Activated CD4-positive, alpha-beta T cell treated with anti-CD3 and anti-CD28 coated beads, Interleukin-2, amount 10 ng/mL, durations not matched to agents 24 days and 14 days (primary cell): ENCODE measurements at regions of chr6 and their contacts with region 1.

Region 1: DNA sequence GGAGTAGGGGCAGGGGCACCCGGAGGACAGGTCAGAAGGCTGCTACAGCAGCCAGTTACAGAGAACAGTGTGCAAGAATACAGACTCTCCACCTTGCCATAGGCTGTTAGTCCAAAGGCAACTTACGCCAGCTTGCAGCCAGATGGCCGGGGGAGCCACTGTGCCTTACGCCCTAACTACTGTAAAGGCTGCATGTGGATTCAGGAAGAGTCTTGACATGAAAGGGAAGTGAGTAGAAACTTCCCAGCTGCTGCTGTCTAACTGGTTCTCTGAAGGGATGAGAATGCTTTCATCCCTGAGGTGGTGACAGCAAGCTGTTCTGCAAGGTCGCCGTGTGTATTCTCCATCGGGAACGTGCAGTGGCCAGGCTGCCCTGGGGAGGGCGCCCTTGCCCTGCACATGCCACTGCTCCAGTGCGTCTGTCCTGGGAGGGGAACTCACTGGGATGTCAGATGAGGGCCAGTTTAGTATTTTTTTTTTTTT is 46.1 kb downstream of the LYRM4 start:
- DNase-seq: peak; percentile 74
- H3K4me3 Mint-ChIP-seq: no peak overlapping the region
- H3K27ac Mint-ChIP-seq: no peak overlapping the region
- H3K4me1 Mint-ChIP-seq: peaks cover 10% of the 10 kb centered on the region
- H3K27me3 Mint-ChIP-seq: no peaks in the 10 kb centered on the region

Region 2: GRCh38 chr6:4370066-4370465 is 844.5 kb before region 1 on chr6:
- intact Hi-C with region 1: no loop called
- DNase-seq: no peak
- H3K4me3 Mint-ChIP-seq: no peak overlapping the region
- H3K27ac Mint-ChIP-seq: no peak overlapping the region
- H3K4me1 Mint-ChIP-seq: no peaks in the 10 kb centered on the region
- H3K27me3 Mint-ChIP-seq: no peaks in the 10 kb centered on the region

Region 3: GRCh38 chr6:5143634-5144311 is 70.8 kb before region 1 on chr6:
- intact Hi-C with region 1: no loop called
- DNase-seq: peak; percentile 94
- H3K4me3 Mint-ChIP-seq: no peak overlapping the region
- H3K27ac Mint-ChIP-seq: no peak overlapping the region
- H3K4me1 Mint-ChIP-seq: peaks cover 4% of the 10 kb centered on the region
- H3K27me3 Mint-ChIP-seq: no peaks in the 10 kb centered on the region

Region 4: GRCh38 chr6:5302995-5303622 is 88.5 kb after region 1 on chr6:
- intact Hi-C with region 1: loop called (anchors 5 kb)
- DNase-seq: peak; percentile 85
- H3K4me3 Mint-ChIP-seq: peak overlapping the region; percentile 36
- H3K27ac Mint-ChIP-seq: no peak overlapping the region
- H3K4me1 Mint-ChIP-seq: peaks cover 21% of the 10 kb centered on the region
- H3K27me3 Mint-ChIP-seq: no peaks in the 10 kb centered on the region

Region 5: DNA sequence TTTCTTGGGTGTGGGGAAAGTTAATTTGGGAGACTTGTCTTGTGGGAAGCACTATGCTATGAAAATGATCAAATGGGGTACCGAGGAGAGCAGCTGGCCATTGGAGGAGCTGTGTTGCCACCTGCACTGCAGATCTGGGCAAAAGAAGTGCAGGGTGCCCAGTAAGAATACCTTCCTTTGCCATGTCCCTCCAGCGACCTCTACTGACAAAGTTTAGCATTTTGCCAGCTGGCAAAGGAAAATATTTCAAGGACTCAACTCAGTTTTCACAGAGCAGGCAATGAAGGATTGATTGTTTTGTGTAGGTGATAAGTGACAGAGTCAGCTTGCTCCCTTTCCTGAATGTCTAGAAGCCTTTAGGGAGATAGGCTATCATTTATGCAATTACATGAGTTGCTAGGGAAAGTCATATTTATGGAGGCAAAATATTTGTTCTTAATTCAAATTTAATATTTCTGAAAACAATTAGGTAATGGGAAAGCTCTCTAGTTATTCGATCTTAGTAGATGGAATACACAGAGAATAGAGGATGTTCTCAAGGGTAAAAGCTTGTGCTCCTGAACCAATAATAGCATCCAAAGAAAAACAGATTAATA is 165.1 kb after region 1 on chr6:
- intact Hi-C with region 1: loop called (anchors 5 kb)
- DNase-seq: peak; percentile 79
- H3K4me3 Mint-ChIP-seq: no peak overlapping the region
- H3K27ac Mint-ChIP-seq: no peak overlapping the region
- H3K4me1 Mint-ChIP-seq: no peaks in the 10 kb centered on the region
- H3K27me3 Mint-ChIP-seq: no peaks in the 10 kb centered on the region

Region 6: DNA sequence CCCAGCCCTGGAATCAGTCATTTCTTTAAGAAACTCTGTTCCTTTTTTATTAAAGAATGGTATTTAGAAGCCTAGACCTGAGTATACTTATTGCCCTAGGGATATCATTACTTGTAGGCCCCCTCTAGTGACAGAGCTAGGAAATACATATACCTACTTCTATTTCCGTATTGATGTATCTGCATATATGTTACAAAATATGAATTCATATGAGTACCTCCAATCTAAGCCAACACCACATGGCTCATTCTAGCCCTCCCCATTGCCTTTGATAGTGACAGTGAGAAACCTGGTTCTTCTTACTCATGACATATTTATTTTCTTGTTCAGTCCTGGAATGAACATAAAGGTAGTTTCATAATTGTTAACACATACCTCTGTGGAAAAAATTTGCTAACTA is 183.9 kb after region 1 on chr6:
- intact Hi-C with region 1: loop called (anchors 2 kb)
- DNase-seq: peak; percentile 64
- H3K4me3 Mint-ChIP-seq: no peak overlapping the region
- H3K27ac Mint-ChIP-seq: no peak overlapping the region
- H3K4me1 Mint-ChIP-seq: peaks cover 6% of the 10 kb centered on the region
- H3K27me3 Mint-ChIP-seq: no peaks in the 10 kb centered on the region